Activated CD4-positive, alpha-beta T cell treated with anti-CD3 and anti-CD28 coated beads for 36 hours (primary cell): ENCODE measurements at regions of chr4 and their contacts with region 1.

Region 1: GRCh38 chr4:148441986-148442831 is at the start of gene NR3C2:
- DNase-seq: peak; percentile 98
- ATAC-seq: peak; percentile 94
- H3K4me3 Mint-ChIP-seq: peak within 1 kb of the TSS; percentile 99
- H3K27ac Mint-ChIP-seq: peak within 1 kb of the TSS; percentile 93
- H3K4me1 Mint-ChIP-seq: peaks cover 47% of the 10 kb centered on the region
- H3K27me3 Mint-ChIP-seq: peaks cover 11% of the 10 kb centered on the region
- total RNA-seq, gene NR3C2: 3.7 to 5.8 TPM

Region 2: DNA sequence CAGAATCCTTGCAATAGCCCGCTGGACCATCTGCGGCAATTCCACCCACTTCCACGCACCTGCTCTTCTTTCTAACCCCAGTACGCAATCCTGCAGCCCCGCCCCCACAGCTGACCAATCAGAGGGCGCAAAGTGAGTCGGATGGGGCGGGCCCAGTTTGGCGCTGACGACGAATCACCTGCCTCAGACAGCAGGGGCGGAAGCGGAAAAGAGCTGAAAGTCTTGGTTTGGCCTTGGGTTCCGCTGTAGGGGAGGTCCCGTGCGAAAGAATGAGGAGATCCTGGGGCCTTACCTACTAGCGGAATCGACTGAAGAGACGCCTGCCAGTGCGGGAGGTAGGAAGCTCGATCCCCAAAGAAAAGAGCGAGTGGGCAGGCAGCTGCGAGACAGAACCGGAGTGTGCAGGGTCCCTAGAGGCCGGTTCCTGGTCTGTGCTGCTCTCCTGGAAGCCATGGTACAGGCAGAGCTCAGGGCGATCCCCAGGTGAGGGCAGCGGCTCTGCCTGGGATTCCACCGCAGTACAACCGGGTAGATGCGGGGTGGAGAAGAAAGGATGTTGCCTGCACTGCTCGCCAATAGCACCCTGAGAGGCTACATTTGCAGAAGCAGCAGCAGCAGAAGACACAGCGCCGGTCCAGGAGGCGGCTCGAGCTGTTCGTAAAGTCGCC is 824.9 kb before region 1 on chr4 and contains the start of gene TMEM184C:
- CTCF ChIA-PET with region 1: no interaction called
- POLR2A ChIA-PET with region 1: no interaction called
- intact Hi-C with region 1: loop called in 1 of 2 experiments (anchors 2 kb)
- DNase-seq: peak; percentile 99
- ATAC-seq: peak; percentile 98
- H3K4me3 Mint-ChIP-seq: peak within 1 kb of the TSS; percentile 93
- H3K27ac Mint-ChIP-seq: peak within 1 kb of the TSS; percentile 94
- H3K4me1 Mint-ChIP-seq: peaks cover 26% of the 10 kb centered on the region
- H3K27me3 Mint-ChIP-seq: peaks cover 3% of the 10 kb centered on the region
- total RNA-seq, gene TMEM184C: 11.7 to 15.3 TPM

Region 3: DNA sequence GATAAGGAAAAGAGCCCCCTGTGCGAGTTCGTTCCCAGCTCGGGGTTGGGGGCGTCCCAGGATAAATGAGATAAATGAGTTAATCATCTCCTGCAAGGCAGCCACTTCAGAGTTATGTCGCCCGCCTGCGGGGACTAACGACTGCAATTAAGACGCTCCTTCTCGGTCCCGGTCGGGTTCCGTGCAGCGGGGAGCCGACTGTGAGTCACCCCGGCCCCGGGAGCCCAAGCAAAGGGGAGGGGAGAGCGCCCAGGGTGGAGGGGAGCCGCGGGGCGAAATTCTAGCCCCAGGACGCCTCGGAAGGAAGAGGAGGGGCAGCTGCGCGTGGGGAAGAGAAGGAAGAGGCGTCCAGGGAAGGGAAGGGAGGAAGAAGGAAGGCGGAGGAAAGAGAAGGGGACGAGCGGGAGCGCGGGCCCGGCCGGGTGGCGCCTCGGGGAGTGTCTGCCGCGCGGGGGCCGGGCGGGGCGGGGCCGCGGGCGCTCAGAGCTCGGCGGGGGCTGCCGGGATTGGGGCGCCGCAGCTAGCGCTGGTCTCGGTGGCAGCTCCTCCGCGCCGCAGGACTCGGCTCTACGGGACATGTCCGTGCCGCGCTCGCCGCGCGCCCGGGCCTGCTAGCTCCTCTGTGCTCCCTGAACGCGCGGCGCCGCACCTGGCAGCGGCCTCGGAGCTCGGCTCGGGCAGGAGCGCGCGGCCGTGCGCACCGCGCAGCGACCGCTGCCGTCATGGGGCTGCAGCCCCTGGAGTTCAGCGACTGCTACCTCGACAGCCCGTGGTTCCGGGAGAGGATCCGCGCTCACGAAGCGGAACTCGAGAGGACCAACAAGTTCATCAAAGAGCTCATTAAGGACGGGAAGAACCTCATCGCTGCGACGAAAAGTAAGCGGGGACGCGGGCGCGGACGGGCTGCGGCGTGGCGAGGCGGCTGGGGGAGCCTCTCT is 710.4 kb before region 1 on chr4 and contains the start of gene ARHGAP10:
- CTCF ChIA-PET with region 1: no interaction called
- POLR2A ChIA-PET with region 1: no interaction called
- intact Hi-C with region 1: loop called in 1 of 2 experiments (anchors 5 kb)
- DNase-seq: peak; percentile 83
- ATAC-seq: peak; percentile 82
- H3K4me3 Mint-ChIP-seq: peak within 1 kb of the TSS; percentile 85
- H3K27ac Mint-ChIP-seq: peak within 1 kb of the TSS; percentile 87
- H3K4me1 Mint-ChIP-seq: peaks cover 45% of the 10 kb centered on the region
- H3K27me3 Mint-ChIP-seq: peaks cover 3% of the 10 kb centered on the region
- total RNA-seq, gene ARHGAP10: 6.1 to 6.2 TPM

Region 4: GRCh38 chr4:148056869-148057268 is 385.3 kb before region 1 on chr4:
- CTCF ChIA-PET with region 1: interaction called, 3 read pairs
- POLR2A ChIA-PET with region 1: no interaction called
- intact Hi-C with region 1: loop called (anchors 2 to 10 kb)
- DNase-seq: peak; percentile 83
- ATAC-seq: peak; percentile 85
- H3K4me3 Mint-ChIP-seq: no peak overlapping the region
- H3K27ac Mint-ChIP-seq: no peak overlapping the region
- H3K4me1 Mint-ChIP-seq: peaks cover 92% of the 10 kb centered on the region
- H3K27me3 Mint-ChIP-seq: no peaks in the 10 kb centered on the region

Region 5: GRCh38 chr4:148735432-148736155 is 293.4 kb after region 1 on chr4:
- CTCF ChIA-PET with region 1: no interaction called
- POLR2A ChIA-PET with region 1: no interaction called
- intact Hi-C with region 1: loop called in 1 of 2 experiments (anchors 5 kb)
- DNase-seq: peak; percentile 42
- ATAC-seq: peak; percentile 94
- H3K4me3 Mint-ChIP-seq: no peak overlapping the region
- H3K27ac Mint-ChIP-seq: no peak overlapping the region
- H3K4me1 Mint-ChIP-seq: no peaks in the 10 kb centered on the region
- H3K27me3 Mint-ChIP-seq: peaks cover 6% of the 10 kb centered on the region